Calu3 (cell line): ENCODE measurements at regions of chrX and their contacts with region 1.

Region 1: GRCh38 chrX:104098151-104098808 is 14.0 kb upstream of the ZCCHC18 start:
- DNase-seq: peak; percentile 52
- H3K4me3 Mint-ChIP-seq: no peak overlapping the region
- H3K27ac Mint-ChIP-seq: no peak overlapping the region
- H3K4me1 Mint-ChIP-seq: no peaks in the 10 kb centered on the region
- H3K27me3 Mint-ChIP-seq: peaks cover 64% of the 10 kb centered on the region
- CTCF ChIP-seq: peak; percentile 43

Region 2: GRCh38 chrX:104113222-104113965 is 15.1 kb after region 1 on chrX:
- CTCF ChIA-PET with region 1: no interaction called
- intact Hi-C with region 1: loop called (anchors 2 kb)
- DNase-seq: peak; percentile 69
- H3K4me3 Mint-ChIP-seq: peak overlapping the region; percentile 94
- H3K27ac Mint-ChIP-seq: no peak overlapping the region
- H3K4me1 Mint-ChIP-seq: no peaks in the 10 kb centered on the region
- H3K27me3 Mint-ChIP-seq: peaks cover 84% of the 10 kb centered on the region
- CTCF ChIP-seq: no peak

Region 3: DNA sequence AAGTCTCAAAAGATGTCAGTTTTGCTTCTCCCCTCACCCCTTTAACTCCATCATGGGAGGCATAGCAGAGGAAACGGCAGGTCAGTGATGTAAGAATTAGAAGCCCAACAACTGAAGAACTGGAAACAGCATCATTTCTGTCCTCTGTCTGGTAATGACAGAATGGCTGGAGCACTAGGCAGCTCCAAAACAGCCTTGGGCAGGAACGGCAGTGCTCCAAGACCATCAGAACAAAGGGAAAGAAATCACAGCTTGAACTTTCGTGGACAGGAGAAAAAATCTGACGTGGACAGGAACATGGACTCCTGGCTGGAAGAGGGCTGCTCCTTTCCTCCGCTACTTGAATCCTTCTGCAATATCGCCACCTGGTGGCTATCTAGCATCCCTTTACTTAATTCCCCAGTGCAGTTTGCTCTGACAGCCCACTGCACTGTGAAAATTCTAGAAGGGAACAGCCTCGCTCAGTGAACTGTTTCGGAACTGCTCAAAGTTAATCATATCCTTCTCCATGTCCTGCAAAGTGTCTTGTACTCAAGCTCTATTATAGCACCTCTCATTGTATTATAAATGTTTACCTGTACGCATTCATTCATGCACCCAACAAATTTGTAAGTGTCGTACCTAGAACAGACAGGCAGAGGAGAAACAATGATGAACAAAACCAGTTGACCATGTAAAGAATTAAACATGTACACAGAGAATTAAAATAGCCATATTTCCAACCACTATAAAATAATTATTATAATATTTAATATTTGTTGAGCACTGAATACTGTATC is 38.1 kb after region 1 on chrX:
- CTCF ChIA-PET with region 1: no interaction called
- intact Hi-C with region 1: loop called (anchors 1 kb)
- DNase-seq: peak; percentile 75
- H3K4me3 Mint-ChIP-seq: peak overlapping the region; percentile 28
- H3K27ac Mint-ChIP-seq: no peak overlapping the region
- H3K4me1 Mint-ChIP-seq: peaks cover 11% of the 10 kb centered on the region
- H3K27me3 Mint-ChIP-seq: no peaks in the 10 kb centered on the region
- CTCF ChIP-seq: peak; percentile 35

Region 4: GRCh38 chrX:104165894-104166737 is 67.8 kb after region 1 on chrX and contains the start of gene FAM199X:
- CTCF ChIA-PET with region 1: no interaction called
- intact Hi-C with region 1: no loop called
- DNase-seq: peak; percentile 92
- H3K4me3 Mint-ChIP-seq: peak within 1 kb of the TSS; percentile 69
- H3K27ac Mint-ChIP-seq: peak within 1 kb of the TSS; percentile 70
- H3K4me1 Mint-ChIP-seq: peaks cover 34% of the 10 kb centered on the region
- H3K27me3 Mint-ChIP-seq: no peaks in the 10 kb centered on the region
- CTCF ChIP-seq: peak; percentile 70
- total RNA-seq, gene FAM199X: 31.6 and 31.9 TPM in 2 replicates